MCF 10A (cell line): ENCODE measurements at regions of chr1 and their contacts with region 1.

Region 1: DNA sequence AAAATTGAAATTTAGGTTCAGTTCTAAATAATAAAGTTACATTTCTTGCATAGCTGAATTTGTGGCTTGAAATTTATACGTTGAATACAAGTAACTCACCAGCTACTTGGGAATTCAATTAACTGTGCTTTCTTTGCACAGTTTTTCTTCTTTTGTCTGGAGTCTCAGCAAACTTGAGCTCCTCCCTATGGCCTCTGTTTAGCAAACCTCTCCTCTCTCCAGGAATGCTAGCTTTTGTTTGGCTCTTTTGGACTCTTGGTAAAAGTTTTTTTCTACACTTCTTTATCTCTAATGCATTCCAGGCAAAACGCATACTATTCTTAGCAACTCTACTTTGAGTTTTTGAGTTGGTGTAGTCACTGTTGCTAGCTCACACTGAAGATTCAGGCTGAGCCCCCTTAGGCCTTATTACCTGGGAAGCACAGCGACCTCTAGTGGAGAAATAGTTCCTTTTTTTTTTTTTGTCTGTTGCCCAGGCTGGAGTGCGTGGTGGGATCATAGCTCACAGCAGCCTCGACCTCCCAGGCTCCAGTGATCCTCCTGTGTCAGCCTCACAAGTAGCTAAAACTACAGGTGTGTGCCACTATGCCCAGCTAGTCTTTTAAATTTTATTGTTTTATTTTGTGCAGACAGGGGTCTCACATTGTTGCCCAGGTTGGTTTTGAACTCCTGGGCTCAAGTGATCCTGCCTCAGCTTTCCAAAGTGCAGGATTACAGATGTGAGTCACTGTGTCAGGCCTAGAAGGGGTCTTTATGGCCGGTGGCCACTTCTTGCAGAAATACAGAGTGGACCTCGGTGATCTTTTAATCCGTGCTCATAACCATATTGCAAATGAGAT is 61.7 kb downstream of the CASQ2 start:
- DNase-seq: peak; percentile 57
- H3K4me3 Mint-ChIP-seq: no peak overlapping the region
- H3K27ac Mint-ChIP-seq: no peak overlapping the region
- H3K4me1 Mint-ChIP-seq: no peaks in the 10 kb centered on the region
- H3K27me3 Mint-ChIP-seq: peaks cover 10% of the 10 kb centered on the region
- CTCF ChIP-seq: peak; percentile 67

Region 2: GRCh38 chr1:115515270-115515669 is 191.5 kb before region 1 on chr1:
- CTCF ChIA-PET with region 1: no interaction called
- POLR2A ChIA-PET with region 1: no interaction called
- intact Hi-C with region 1: no loop called
- DNase-seq: no peak
- H3K4me3 Mint-ChIP-seq: no peak overlapping the region
- H3K27ac Mint-ChIP-seq: no peak overlapping the region
- H3K4me1 Mint-ChIP-seq: no peaks in the 10 kb centered on the region
- H3K27me3 Mint-ChIP-seq: no peaks in the 10 kb centered on the region
- CTCF ChIP-seq: no peak

Region 3: DNA sequence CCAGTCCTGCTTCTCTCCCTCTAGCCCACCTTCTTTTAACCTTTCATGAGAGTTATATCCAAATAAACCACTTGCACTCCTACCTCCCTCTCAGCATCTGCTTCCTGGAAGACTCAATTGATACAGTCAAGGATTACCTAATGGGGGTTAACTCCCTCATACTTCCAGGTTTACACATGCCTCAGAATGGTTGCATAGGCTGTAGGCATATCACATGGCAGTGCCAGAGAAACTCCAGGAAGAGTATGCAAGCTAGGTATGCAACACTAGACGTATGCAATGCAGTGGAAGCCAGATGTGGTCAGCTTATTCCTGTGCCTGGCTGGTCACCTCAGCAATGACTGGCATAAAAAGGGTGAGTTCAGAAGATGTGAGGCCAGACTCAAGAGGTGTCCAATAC is 97.8 kb before region 1 on chr1:
- CTCF ChIA-PET with region 1: interaction called, 31 read pairs
- POLR2A ChIA-PET with region 1: interaction called, 4 read pairs
- intact Hi-C with region 1: loop called (anchors 1 kb)
- DNase-seq: peak; percentile 9
- H3K4me3 Mint-ChIP-seq: no peak overlapping the region
- H3K27ac Mint-ChIP-seq: no peak overlapping the region
- H3K4me1 Mint-ChIP-seq: peaks cover 12% of the 10 kb centered on the region
- H3K27me3 Mint-ChIP-seq: peaks cover 13% of the 10 kb centered on the region
- CTCF ChIP-seq: no peak

Region 4: GRCh38 chr1:115669002-115669673 is 37.7 kb before region 1 on chr1:
- CTCF ChIA-PET with region 1: interaction called, 19 read pairs
- POLR2A ChIA-PET with region 1: no interaction called
- intact Hi-C with region 1: no loop called
- DNase-seq: peak; percentile 81
- H3K4me3 Mint-ChIP-seq: no peak overlapping the region
- H3K27ac Mint-ChIP-seq: peak overlapping the region; percentile 75
- H3K4me1 Mint-ChIP-seq: peaks cover 27% of the 10 kb centered on the region
- H3K27me3 Mint-ChIP-seq: no peaks in the 10 kb centered on the region
- CTCF ChIP-seq: no peak

Region 5: DNA sequence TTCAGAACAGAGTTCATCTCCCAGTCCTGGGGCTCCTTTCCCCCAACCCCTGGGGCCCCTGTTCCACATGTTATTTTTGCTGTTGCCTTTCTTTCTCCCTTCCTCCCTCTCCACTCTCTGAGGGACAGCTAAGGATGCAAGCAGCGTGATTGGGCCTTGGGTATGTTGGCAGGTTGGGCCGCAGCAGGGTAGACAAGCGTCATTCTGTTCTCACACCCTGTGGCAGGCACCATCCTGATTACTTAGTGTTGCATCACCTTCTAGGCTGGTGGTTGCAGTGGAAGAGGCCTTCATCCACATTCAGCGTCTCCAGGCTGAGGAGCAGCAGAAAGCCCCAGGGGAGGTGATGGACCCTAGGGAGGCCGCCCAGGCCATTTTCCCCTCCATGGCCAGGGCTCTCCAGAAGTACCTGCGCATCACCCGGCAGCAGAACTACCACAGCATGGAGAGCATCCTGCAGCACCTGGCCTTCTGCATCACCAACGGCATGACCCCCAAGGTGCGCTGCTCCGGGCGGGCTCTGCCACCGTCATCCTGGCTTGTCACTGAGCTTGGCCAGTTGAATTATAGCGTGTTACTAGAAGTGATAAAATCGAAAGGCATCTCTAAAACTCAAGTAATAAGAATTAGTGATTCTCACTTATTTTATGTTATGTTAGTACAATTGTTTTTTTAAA is 21.6 kb before region 1 on chr1:
- CTCF ChIA-PET with region 1: interaction called, 10 read pairs
- POLR2A ChIA-PET with region 1: no interaction called
- intact Hi-C with region 1: no loop called
- DNase-seq: no peak
- H3K4me3 Mint-ChIP-seq: no peak overlapping the region
- H3K27ac Mint-ChIP-seq: no peak overlapping the region
- H3K4me1 Mint-ChIP-seq: peaks cover 4% of the 10 kb centered on the region
- H3K27me3 Mint-ChIP-seq: no peaks in the 10 kb centered on the region
- CTCF ChIP-seq: no peak

Region 6: GRCh38 chr1:115717541-115717940 is 10.7 kb after region 1 on chr1:
- CTCF ChIA-PET with region 1: interaction called, 45 read pairs
- POLR2A ChIA-PET with region 1: no interaction called
- intact Hi-C with region 1: no loop called
- DNase-seq: peak; percentile 67
- H3K4me3 Mint-ChIP-seq: no peak overlapping the region
- H3K27ac Mint-ChIP-seq: no peak overlapping the region
- H3K4me1 Mint-ChIP-seq: peaks cover 7% of the 10 kb centered on the region
- H3K27me3 Mint-ChIP-seq: no peaks in the 10 kb centered on the region
- CTCF ChIP-seq: peak; percentile 42

Region 7: DNA sequence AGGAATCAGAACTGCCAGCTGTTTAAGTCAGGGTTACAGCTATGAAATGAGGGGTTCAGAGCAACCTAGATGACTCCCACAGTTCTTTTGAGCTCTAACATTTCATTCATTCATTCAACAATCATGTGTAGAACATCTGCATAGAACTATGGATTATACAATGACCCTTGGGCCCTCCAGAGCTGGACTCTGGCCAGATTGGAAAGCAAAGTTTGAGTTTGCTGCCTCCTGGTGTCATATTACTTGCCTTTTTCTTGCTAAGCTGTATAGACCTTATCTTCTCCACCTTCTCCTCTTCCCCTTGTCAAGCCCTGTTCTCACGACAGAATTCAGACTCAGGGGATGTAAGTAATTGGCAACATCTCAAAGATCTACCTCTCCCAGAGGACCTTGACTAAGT is 57.7 kb after region 1 on chr1:
- CTCF ChIA-PET with region 1: interaction called, 34 read pairs
- POLR2A ChIA-PET with region 1: no interaction called
- intact Hi-C with region 1: no loop called
- DNase-seq: peak; percentile 68
- H3K4me3 Mint-ChIP-seq: no peak overlapping the region
- H3K27ac Mint-ChIP-seq: no peak overlapping the region
- H3K4me1 Mint-ChIP-seq: no peaks in the 10 kb centered on the region
- H3K27me3 Mint-ChIP-seq: no peaks in the 10 kb centered on the region
- CTCF ChIP-seq: peak; percentile 63